CD8-positive, alpha-beta T cell (primary cell): ENCODE measurements at regions of chr3 and their contacts with region 1.

Region 1: GRCh38 chr3:25648107-25648535 is 16.6 kb downstream of the TOP2B start:
- DNase-seq: peak; percentile 69 to 89 (median 83)
- ATAC-seq: peak; percentile 99
- H3K4me3 ChIP-seq: no peak overlapping the region
- H3K4me3 Mint-ChIP-seq: no peak overlapping the region
- H3K27ac ChIP-seq: no peak overlapping the region
- H3K27ac Mint-ChIP-seq: peak overlapping the region; percentile 19
- H3K4me1 ChIP-seq: peaks cover 2% of the 10 kb centered on the region
- H3K4me1 Mint-ChIP-seq: peaks cover 56% of the 10 kb centered on the region
- H3K27me3 ChIP-seq: no peaks in the 10 kb centered on the region
- H3K27me3 Mint-ChIP-seq: no peaks in the 10 kb centered on the region
- CTCF ChIP-seq: peak; percentile 93

Region 2: GRCh38 chr3:23740517-23740965 is 1907.6 kb before region 1 on chr3:
- CTCF ChIA-PET with region 1: no interaction called
- POLR2A ChIA-PET with region 1: no interaction called
- intact Hi-C with region 1: no loop called
- DNase-seq: peak in 2 of 9 experiments; percentile 15 to 34
- ATAC-seq: no peak
- H3K4me3 ChIP-seq: no peak overlapping the region
- H3K4me3 Mint-ChIP-seq: no peak overlapping the region
- H3K27ac ChIP-seq: no peak overlapping the region
- H3K27ac Mint-ChIP-seq: no peak overlapping the region
- H3K4me1 ChIP-seq: no peaks in the 10 kb centered on the region
- H3K4me1 Mint-ChIP-seq: peaks cover 3% of the 10 kb centered on the region
- H3K27me3 ChIP-seq: no peaks in the 10 kb centered on the region
- H3K27me3 Mint-ChIP-seq: peaks cover 6% of the 10 kb centered on the region
- CTCF ChIP-seq: no peak

Region 3: GRCh38 chr3:25633919-25634318 is 14.2 kb before region 1 on chr3:
- CTCF ChIA-PET with region 1: interaction called, 11 read pairs
- POLR2A ChIA-PET with region 1: interaction called, 3 read pairs
- intact Hi-C with region 1: no loop called
- DNase-seq: no peak
- ATAC-seq: no peak
- H3K4me3 ChIP-seq: no peak overlapping the region
- H3K4me3 Mint-ChIP-seq: no peak overlapping the region
- H3K27ac ChIP-seq: no peak overlapping the region
- H3K27ac Mint-ChIP-seq: peak overlapping the region; percentile 62
- H3K4me1 ChIP-seq: no peaks in the 10 kb centered on the region
- H3K4me1 Mint-ChIP-seq: peaks cover 14% of the 10 kb centered on the region
- H3K27me3 ChIP-seq: no peaks in the 10 kb centered on the region
- H3K27me3 Mint-ChIP-seq: no peaks in the 10 kb centered on the region
- CTCF ChIP-seq: no peak

Region 4: GRCh38 chr3:25725813-25726210 is 77.7 kb after region 1 on chr3:
- CTCF ChIA-PET with region 1: interaction called, 11 read pairs
- POLR2A ChIA-PET with region 1: no interaction called
- intact Hi-C with region 1: loop called in 1 of 2 experiments (anchors 5 kb)
- DNase-seq: no peak
- ATAC-seq: no peak
- H3K4me3 ChIP-seq: no peak overlapping the region
- H3K4me3 Mint-ChIP-seq: no peak overlapping the region
- H3K27ac ChIP-seq: no peak overlapping the region
- H3K27ac Mint-ChIP-seq: peak overlapping the region; percentile 56
- H3K4me1 ChIP-seq: no peaks in the 10 kb centered on the region
- H3K4me1 Mint-ChIP-seq: no peaks in the 10 kb centered on the region
- H3K27me3 ChIP-seq: no peaks in the 10 kb centered on the region
- H3K27me3 Mint-ChIP-seq: no peaks in the 10 kb centered on the region
- CTCF ChIP-seq: no peak

Region 5: DNA sequence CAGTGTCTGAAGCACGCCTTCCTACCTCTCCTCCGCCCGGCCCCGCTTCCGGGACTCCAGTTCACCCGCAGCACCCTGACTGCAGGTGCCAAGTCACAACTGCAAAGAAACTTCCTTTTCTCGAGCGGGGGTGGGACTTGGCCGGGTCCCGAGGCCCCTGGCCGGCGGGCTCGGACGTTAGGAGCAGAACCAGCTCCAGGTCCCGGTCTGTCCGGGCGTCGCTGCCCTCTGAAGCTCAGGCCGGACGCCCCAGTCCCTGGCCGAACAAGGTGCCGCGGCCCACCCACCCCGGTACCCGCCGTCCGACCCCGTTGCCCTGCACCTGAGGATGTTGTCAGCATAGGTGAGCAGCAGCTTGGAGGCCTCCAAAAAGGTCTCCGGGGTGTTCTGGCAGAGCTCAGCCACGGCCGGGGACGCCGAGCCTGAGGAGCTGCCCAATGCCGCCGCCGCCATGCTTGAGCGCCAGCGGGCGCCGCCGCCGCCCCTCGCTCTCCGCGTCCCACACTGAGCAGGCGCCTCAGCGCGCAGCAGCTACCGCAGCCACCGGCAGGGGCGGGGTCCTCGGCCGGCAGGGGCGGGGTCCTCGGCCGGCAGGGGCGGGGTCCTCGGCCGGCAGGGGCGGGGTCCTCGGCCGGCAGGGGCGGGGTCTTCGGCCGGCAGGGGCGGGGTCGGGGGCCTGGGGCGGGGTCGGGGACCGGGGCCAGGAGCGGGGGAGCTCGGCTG is 135.0 kb after region 1 on chr3 and contains the start of gene NGLY1:
- CTCF ChIA-PET with region 1: interaction called, 13 read pairs
- POLR2A ChIA-PET with region 1: no interaction called
- intact Hi-C with region 1: loop called in 1 of 2 experiments (anchors 5 kb)
- DNase-seq: peak; percentile 72 to 91 (median 84)
- ATAC-seq: peak; percentile 90
- H3K4me3 ChIP-seq: peak within 1 kb of the TSS; percentile 94 to 97
- H3K4me3 Mint-ChIP-seq: peak within 1 kb of the TSS; percentile 94
- H3K27ac ChIP-seq: peak within 1 kb of the TSS; percentile 84 to 85
- H3K27ac Mint-ChIP-seq: peak within 1 kb of the TSS; percentile 93
- H3K4me1 ChIP-seq: peaks cover 30% of the 10 kb centered on the region
- H3K4me1 Mint-ChIP-seq: peaks cover 52% of the 10 kb centered on the region
- H3K27me3 ChIP-seq: no peaks in the 10 kb centered on the region
- H3K27me3 Mint-ChIP-seq: no peaks in the 10 kb centered on the region
- CTCF ChIP-seq: no peak
- total RNA-seq, gene NGLY1: 51.4 to 57.0 TPM

Region 6: DNA sequence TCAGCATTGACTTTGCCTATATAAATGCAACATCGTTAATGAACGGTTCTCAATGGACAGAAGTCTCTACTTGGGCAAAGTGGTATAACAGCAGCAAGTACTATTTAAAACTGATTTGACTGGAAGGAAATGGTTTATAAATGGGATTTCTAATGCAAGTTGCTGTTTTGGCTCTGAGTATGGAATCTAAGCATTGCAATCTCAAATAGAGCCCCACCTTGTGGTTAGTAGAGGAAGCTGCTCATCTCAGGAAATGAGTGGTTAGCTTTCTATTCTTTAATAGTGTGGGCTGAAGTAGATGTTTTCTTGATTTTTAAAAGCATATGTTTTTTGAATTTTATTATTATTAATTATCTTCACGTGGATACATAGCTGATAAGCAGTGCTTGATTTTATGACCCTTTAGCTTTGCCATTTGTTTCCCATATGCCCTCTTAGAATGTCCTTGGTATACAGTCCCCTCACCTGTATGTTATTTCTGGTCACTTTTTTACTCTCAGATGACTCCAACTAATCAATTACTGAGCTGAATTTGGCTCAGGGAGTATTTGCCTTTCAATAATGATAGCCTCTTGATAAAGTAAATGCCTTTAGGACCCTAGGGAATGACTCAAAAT is 208.9 kb after region 1 on chr3:
- CTCF ChIA-PET with region 1: interaction called, 117 read pairs
- POLR2A ChIA-PET with region 1: interaction called, 4 read pairs
- intact Hi-C with region 1: loop called (anchors 1 kb)
- DNase-seq: peak in 3 of 9 experiments; percentile 10 to 66 (median 54)
- ATAC-seq: peak; percentile 84
- H3K4me3 ChIP-seq: no peak overlapping the region
- H3K4me3 Mint-ChIP-seq: no peak overlapping the region
- H3K27ac ChIP-seq: no peak overlapping the region
- H3K27ac Mint-ChIP-seq: no peak overlapping the region
- H3K4me1 ChIP-seq: no peaks in the 10 kb centered on the region
- H3K4me1 Mint-ChIP-seq: no peaks in the 10 kb centered on the region
- H3K27me3 ChIP-seq: no peaks in the 10 kb centered on the region
- H3K27me3 Mint-ChIP-seq: no peaks in the 10 kb centered on the region
- CTCF ChIP-seq: peak; percentile 67

Region 7: DNA sequence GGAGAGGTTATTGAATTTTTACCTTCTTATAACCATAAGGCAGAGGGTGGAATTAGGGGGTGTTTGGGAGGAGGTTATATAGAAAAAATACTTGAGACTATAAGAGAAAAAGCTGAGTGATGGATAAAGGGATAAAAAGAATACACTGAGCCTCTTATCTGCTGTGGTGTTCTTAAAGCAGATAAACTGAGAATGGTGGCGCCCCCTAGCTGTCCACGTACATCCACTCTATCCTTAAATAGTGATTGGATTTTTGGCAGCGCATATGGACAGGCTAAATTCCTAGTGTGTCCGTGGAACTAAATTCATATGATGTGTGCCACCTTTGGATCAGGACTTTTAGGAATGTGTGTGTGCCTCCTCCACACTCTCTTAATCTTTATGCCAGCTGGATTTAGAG is 262.9 kb after region 1 on chr3:
- CTCF ChIA-PET with region 1: interaction called, 5 read pairs
- POLR2A ChIA-PET with region 1: no interaction called
- intact Hi-C with region 1: loop called (anchors 5 kb)
- DNase-seq: peak in 7 of 9 experiments; percentile 14 to 54 (median 35)
- ATAC-seq: no peak
- H3K4me3 ChIP-seq: no peak overlapping the region
- H3K4me3 Mint-ChIP-seq: no peak overlapping the region
- H3K27ac ChIP-seq: peak overlapping the region in 1 of 2 experiments; percentile 63
- H3K27ac Mint-ChIP-seq: no peak overlapping the region
- H3K4me1 ChIP-seq: no peaks in the 10 kb centered on the region
- H3K4me1 Mint-ChIP-seq: peaks cover 14% of the 10 kb centered on the region
- H3K27me3 ChIP-seq: no peaks in the 10 kb centered on the region
- H3K27me3 Mint-ChIP-seq: peaks cover 2% of the 10 kb centered on the region
- CTCF ChIP-seq: peak; percentile 34

Region 8: DNA sequence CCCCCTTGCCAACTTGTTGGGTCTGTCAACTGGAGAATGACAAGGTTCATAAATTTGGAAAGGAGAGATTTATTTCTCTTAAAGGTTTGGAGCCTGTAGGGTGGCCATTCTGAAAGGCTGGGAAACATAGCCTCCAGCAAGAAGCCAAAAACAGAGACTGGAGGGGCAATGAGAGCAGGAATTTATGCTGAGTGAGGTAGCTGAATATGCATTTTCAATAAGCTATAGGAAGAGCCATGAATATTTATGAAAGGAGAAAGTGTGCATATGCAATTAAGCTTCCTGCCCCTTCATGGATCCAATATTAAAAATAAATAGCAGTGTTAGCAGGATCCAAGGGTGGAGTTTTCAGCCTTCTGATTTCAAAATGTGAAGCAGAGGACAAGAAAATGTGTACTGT is 668.4 kb after region 1 on chr3:
- CTCF ChIA-PET with region 1: no interaction called
- POLR2A ChIA-PET with region 1: no interaction called
- intact Hi-C with region 1: no loop called
- DNase-seq: no peak
- ATAC-seq: no peak
- H3K4me3 ChIP-seq: no peak overlapping the region
- H3K4me3 Mint-ChIP-seq: no peak overlapping the region
- H3K27ac ChIP-seq: no peak overlapping the region
- H3K27ac Mint-ChIP-seq: no peak overlapping the region
- H3K4me1 ChIP-seq: no peaks in the 10 kb centered on the region
- H3K4me1 Mint-ChIP-seq: no peaks in the 10 kb centered on the region
- H3K27me3 ChIP-seq: no peaks in the 10 kb centered on the region
- H3K27me3 Mint-ChIP-seq: no peaks in the 10 kb centered on the region
- CTCF ChIP-seq: no peak